Dorsolateral prefrontal cortex (tissue), 120 donors: ENCODE measurements at regions of chr20 and their contacts with region 1.

Region 1: DNA sequence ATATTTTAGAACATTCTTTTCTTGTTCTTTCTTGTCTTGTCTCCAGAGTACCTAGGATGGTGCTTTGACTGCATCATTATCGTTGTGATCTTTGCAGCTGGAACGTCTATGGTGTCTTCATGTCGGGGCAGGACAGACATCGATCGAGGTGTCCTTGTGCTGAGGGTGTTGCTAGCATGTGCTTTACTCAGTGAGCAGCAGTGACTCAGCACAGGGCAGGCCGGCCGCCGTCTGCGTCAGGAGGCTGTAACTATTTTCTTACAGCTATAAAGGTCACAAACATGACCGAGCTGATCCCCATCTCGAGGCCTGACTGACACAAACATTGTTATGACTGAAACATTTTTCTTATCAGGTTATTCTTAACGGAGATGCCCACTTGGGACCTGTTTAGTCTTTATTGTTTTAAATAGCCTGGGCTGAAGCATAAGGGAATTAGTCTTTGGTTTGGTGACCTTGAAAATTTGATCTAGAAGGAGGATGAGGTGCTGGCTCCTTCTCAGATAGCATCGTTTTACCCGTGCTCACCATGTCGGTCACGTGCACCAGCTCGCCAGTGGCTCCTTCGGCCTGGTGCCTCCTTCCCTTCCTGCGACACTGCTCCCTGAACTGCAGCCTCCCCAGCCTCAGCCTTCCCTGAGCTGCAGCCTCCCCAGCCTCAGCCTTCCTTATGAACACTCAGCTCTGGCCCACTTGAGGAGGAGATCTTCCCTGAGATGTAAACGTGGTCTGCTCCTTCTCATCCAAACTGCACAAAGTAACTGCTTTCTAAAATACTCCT is 15.1 kb upstream of the CTCFL start:
- DNase-seq: no peak
- H3K4me3 ChIP-seq: no peak overlapping the region
- H3K27ac ChIP-seq: no peak overlapping the region
- H3K27me3 ChIP-seq: peaks cover 0 to 19% (median 0%) of the 10 kb centered on the region in 45 donors
- CTCF ChIP-seq: no peak

Region 2: GRCh38 chr20:57582432-57583305 is 42.6 kb after region 1 on chr20:
- intact Hi-C with region 1: loop called in 1 of 2 experiments (anchors 5 kb)
- DNase-seq: peak in 2 of 10 donors; percentile 64 to 66
- H3K4me3 ChIP-seq: peak overlapping the region in 21 of 59 donors; percentile 1 to 40 (median 19)
- H3K27ac ChIP-seq: peak overlapping the region in 57 of 59 donors; percentile 3 to 93 (median 82)
- H3K27me3 ChIP-seq: peaks cover 0 to 47% (median 0%) of the 10 kb centered on the region in 45 donors
- CTCF ChIP-seq: peak in 48 of 56 donors; percentile 10 to 57 (median 32)

Region 3: DNA sequence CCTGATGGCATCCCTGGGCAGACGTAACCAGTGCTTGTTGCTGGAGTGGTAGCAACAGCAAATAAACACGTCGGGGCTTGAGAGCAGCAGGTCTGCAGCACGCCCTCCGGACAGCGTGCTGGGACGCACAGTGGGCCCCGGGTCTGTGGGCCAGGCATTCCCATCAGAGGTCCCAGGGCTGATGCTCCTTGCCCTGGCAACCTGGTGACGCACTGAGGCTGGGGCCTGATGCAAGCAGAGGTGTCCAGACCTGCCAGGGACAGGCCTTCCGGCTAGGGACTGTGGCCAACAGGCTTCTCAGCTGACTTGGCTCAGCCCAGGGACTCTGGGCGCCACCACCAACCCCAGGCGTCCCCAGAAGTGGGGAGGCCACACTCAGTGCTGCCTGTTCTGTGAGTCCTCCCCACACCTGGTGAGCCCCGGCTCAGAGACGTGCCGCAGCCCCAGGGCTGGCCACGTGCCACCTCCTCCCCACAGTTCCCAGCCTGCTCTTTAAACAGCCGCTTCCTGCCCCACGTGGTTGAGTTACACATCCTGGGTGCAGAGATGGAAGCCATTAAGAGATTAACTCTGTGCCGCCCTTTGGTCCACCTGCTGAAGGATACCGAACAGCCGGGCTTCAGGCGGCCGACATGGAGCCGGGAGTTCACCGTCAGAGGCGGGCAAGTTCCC is 117.5 kb after region 1 on chr20:
- intact Hi-C with region 1: no loop called
- DNase-seq: peak in 9 of 10 donors; percentile 10 to 41 (median 29)
- H3K4me3 ChIP-seq: no peak overlapping the region
- H3K27ac ChIP-seq: peak overlapping the region in 2 of 59 donors; percentile 3 to 7
- H3K27me3 ChIP-seq: no peaks in the 10 kb centered on the region
- CTCF ChIP-seq: no peak